CD8-positive, alpha-beta T cell (primary cell): ENCODE measurements at regions of chr2 and their contacts with region 1.

Region 1: GRCh38 chr2:157302492-157303099 is 23.0 kb downstream of the ERMN start:
- DNase-seq: peak in 7 of 9 experiments; percentile 2 to 71 (median 18)
- ATAC-seq: peak; percentile 89
- H3K4me3 ChIP-seq: no peak overlapping the region
- H3K4me3 Mint-ChIP-seq: no peak overlapping the region
- H3K27ac ChIP-seq: no peak overlapping the region
- H3K27ac Mint-ChIP-seq: no peak overlapping the region
- H3K4me1 ChIP-seq: no peaks in the 10 kb centered on the region
- H3K4me1 Mint-ChIP-seq: peaks cover 17% of the 10 kb centered on the region
- H3K27me3 ChIP-seq: no peaks in the 10 kb centered on the region
- H3K27me3 Mint-ChIP-seq: peaks cover 3% of the 10 kb centered on the region
- CTCF ChIP-seq: peak; percentile 89

Region 2: DNA sequence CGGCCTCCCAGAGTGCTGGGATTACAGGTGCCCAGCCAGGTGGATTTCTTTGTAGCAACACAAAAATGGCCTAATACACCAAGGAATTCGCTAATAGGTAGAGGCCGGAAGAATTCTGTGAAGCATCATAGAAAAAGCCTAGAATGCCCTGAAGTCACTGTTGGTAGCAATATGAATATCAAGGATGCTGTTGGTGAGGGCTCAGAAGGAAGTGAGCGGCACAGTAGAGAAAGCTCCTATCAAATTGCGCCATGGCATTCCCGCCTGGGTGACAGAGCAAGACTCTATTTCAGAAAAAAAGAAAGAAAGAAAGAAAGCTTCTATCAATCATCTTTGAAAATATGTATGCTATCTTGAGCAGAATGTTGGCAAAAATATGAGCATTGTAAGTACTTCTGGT is 21.3 kb before region 1 on chr2:
- CTCF ChIA-PET with region 1: interaction called, 32 read pairs
- POLR2A ChIA-PET with region 1: no interaction called
- intact Hi-C with region 1: no loop called
- DNase-seq: no peak
- ATAC-seq: no peak
- H3K4me3 ChIP-seq: no peak overlapping the region
- H3K4me3 Mint-ChIP-seq: no peak overlapping the region
- H3K27ac ChIP-seq: no peak overlapping the region
- H3K27ac Mint-ChIP-seq: no peak overlapping the region
- H3K4me1 ChIP-seq: no peaks in the 10 kb centered on the region
- H3K4me1 Mint-ChIP-seq: no peaks in the 10 kb centered on the region
- H3K27me3 ChIP-seq: no peaks in the 10 kb centered on the region
- H3K27me3 Mint-ChIP-seq: peaks cover 30% of the 10 kb centered on the region
- CTCF ChIP-seq: no peak

Region 3: DNA sequence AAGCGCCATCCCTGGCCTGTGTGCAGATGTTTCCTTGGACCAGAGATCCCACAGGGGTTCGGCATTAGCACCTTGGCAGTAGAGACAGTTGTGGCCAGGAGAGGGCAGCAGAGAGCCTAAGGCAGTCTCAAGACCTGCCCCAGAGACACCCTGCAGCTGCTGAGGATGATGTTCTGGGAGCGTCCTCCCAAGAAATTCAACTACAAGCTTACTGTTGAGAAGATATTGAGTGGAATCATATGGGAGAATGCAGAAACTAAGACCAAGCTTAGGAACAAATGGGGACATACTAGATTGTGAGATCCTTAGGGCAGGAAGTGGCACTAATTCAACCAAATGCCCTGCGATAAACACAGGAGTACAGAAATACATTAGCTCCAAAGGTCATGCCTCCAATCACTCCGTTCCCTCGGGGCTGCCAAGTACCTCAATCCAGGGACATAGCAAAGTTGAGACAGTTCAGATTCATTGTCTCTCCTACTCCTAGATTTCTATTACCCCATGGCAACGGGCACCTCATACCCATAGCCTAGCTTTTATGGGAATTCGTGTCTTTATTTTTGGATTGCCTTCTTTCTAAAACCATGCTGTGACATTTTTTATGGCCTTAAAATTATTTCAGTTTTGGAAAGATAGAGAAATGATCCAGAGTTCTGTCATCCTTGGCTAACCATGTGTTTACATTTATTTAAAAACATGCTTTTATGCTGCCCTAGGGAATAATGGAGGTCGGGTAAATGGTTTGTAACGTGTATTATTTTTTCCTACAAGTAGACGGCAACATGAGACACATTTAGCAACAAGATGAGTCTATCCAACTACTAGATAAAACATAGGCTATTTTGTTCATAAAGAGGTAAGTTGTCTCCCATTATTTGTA is 25.3 kb after region 1 on chr2:
- CTCF ChIA-PET with region 1: interaction called, 66 read pairs
- POLR2A ChIA-PET with region 1: interaction called, 3 read pairs
- intact Hi-C with region 1: loop called in 1 of 2 experiments (anchors 1 kb)
- DNase-seq: peak; percentile 75 to 94 (median 89)
- ATAC-seq: peak; percentile 95
- H3K4me3 ChIP-seq: peak overlapping the region in 1 of 2 experiments; percentile 2
- H3K4me3 Mint-ChIP-seq: peak overlapping the region; percentile 64
- H3K27ac ChIP-seq: no peak overlapping the region
- H3K27ac Mint-ChIP-seq: peak overlapping the region; percentile 86
- H3K4me1 ChIP-seq: peaks cover 36% of the 10 kb centered on the region
- H3K4me1 Mint-ChIP-seq: peaks cover 53% of the 10 kb centered on the region
- H3K27me3 ChIP-seq: no peaks in the 10 kb centered on the region
- H3K27me3 Mint-ChIP-seq: no peaks in the 10 kb centered on the region
- CTCF ChIP-seq: peak; percentile 87

Region 4: DNA sequence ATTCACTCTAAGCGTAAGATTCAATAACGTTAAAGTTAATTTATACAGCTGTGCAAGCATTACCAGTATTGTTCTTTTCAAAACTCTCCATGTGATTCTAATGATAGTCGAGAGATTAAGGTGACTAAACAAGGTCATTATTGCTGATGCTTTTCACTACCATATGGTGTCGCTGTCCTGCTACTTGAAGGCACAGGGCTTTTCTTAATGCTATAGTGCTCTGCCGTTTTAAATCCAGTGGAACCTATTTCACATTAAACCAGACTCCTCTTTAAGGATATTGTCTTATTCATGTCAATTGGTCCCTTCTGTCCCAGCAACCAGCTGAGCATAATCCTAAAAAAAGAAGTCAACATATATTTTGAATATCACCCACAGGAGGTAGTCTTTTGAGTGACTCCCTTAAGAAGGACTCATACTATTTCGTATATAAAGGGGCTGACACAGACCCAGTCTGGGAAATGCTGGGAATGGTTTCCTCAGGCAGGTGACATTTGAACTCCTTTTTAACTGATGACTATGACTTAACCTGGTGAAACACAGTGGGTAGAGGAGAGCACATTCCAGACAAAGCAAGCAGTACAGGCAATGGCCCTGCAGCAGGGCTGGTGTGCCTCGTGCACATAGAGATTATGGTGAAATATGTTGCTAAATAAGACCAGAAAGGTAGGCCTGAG is 195.2 kb after region 1 on chr2:
- CTCF ChIA-PET with region 1: interaction called, 77 read pairs
- POLR2A ChIA-PET with region 1: no interaction called
- intact Hi-C with region 1: loop called in 1 of 2 experiments (anchors 2 kb)
- DNase-seq: peak in 2 of 9 experiments; percentile 49 to 62
- ATAC-seq: peak; percentile 91
- H3K4me3 ChIP-seq: no peak overlapping the region
- H3K4me3 Mint-ChIP-seq: no peak overlapping the region
- H3K27ac ChIP-seq: no peak overlapping the region
- H3K27ac Mint-ChIP-seq: no peak overlapping the region
- H3K4me1 ChIP-seq: peaks cover 7% of the 10 kb centered on the region
- H3K4me1 Mint-ChIP-seq: peaks cover 33% of the 10 kb centered on the region
- H3K27me3 ChIP-seq: no peaks in the 10 kb centered on the region
- H3K27me3 Mint-ChIP-seq: no peaks in the 10 kb centered on the region
- CTCF ChIP-seq: peak; percentile 71

Region 5: DNA sequence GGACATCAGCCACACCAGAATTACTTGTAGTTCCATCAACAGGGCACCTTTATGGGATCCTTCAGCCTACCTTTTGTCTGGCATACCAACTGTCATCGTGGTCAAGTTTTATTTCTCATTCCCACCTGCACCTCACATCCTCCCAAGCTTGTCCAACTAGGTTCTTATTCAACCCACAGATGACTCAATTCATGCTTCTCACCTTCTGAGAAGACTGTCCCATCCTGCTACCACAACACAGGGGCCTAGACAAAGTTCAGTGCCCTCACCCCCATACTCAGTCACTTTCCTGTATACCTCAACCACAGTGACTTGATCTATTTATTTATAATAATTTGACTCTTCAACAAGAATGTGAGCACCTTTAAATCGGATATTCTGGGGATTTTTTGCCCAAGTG is 440.5 kb after region 1 on chr2:
- CTCF ChIA-PET with region 1: interaction called, 4 read pairs
- POLR2A ChIA-PET with region 1: no interaction called
- intact Hi-C with region 1: loop called in 1 of 2 experiments (anchors 5 kb)
- DNase-seq: no peak
- ATAC-seq: no peak
- H3K4me3 ChIP-seq: no peak overlapping the region
- H3K4me3 Mint-ChIP-seq: no peak overlapping the region
- H3K27ac ChIP-seq: no peak overlapping the region
- H3K27ac Mint-ChIP-seq: no peak overlapping the region
- H3K4me1 ChIP-seq: no peaks in the 10 kb centered on the region
- H3K4me1 Mint-ChIP-seq: no peaks in the 10 kb centered on the region
- H3K27me3 ChIP-seq: no peaks in the 10 kb centered on the region
- H3K27me3 Mint-ChIP-seq: no peaks in the 10 kb centered on the region
- CTCF ChIP-seq: no peak

Region 6: DNA sequence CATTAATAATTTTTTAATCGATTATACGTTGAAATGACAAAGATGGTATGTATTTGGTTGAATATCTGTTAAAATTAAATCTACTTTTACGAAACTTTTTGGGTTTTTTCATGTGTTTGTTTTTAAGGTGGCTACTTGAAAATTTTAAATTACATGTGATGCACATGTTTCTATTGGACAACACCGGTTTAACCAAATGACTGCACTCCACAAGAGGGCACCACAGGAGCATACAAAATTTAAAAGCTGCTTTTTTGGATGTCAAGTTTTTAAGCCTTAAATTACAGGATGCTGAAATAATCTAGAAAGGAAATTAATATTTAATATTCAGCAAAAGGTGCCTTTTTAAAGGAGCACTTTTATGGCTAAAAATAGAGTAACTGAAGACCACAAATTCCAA is 474.8 kb after region 1 on chr2:
- CTCF ChIA-PET with region 1: interaction called, 5 read pairs
- POLR2A ChIA-PET with region 1: no interaction called
- intact Hi-C with region 1: loop called in 1 of 2 experiments (anchors 1 kb)
- DNase-seq: peak in 8 of 9 experiments; percentile 4 to 55 (median 40)
- ATAC-seq: no peak
- H3K4me3 ChIP-seq: no peak overlapping the region
- H3K4me3 Mint-ChIP-seq: no peak overlapping the region
- H3K27ac ChIP-seq: no peak overlapping the region
- H3K27ac Mint-ChIP-seq: no peak overlapping the region
- H3K4me1 ChIP-seq: no peaks in the 10 kb centered on the region
- H3K4me1 Mint-ChIP-seq: peaks cover 11% of the 10 kb centered on the region
- H3K27me3 ChIP-seq: no peaks in the 10 kb centered on the region
- H3K27me3 Mint-ChIP-seq: no peaks in the 10 kb centered on the region
- CTCF ChIP-seq: peak; percentile 68

Region 7: DNA sequence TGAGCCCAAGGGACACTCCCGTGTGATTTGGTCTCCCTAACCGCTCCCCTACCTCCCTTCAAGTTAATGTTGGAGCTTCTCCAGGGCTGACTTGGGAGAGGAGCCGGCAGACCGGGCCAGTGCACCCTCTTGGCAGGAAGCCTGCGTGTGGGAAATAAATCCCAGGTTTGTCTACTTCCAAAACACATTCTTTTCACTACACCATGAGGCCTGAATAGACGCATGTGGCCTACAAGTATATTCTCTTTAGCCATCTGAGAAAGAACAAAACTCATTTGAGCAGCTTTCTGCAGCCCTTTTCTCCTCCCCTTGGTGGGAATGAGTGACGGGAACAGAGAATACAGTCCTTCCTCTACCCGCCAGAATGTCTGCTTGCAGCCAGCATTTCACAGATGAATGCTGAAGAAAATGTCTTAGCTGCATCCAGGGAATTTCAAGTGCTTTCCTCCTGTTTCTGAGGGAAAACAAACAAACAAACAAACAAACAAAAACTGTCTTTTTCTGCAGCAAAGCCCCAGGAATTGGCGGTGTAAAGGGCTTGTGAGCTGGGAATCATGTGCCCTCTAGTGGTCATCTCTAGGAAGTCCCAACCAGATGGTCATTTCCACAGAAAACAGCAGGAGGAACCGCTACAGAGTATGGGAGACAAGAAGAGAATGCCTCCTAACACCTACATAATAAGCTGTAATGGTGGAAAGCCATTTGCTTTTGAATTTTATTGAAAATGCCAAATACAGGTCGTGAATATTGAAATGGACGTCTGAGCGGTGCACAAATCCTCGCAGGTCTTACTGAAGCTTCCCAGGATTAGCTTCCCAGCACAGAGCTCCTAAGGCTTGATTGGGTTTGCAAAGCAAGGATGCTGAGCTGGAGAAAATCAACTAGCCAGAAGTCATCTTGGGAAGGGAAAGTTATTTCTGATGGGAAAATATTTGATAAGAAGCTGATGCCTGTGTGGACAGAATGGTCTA is 1451.3 kb after region 1 on chr2:
- CTCF ChIA-PET with region 1: interaction called, 7 read pairs
- POLR2A ChIA-PET with region 1: no interaction called
- intact Hi-C with region 1: loop called (anchors 1 to 2 kb)
- DNase-seq: peak in 4 of 9 experiments; percentile 21 to 58 (median 37)
- ATAC-seq: peak; percentile 52
- H3K4me3 ChIP-seq: no peak overlapping the region
- H3K4me3 Mint-ChIP-seq: no peak overlapping the region
- H3K27ac ChIP-seq: no peak overlapping the region
- H3K27ac Mint-ChIP-seq: no peak overlapping the region
- H3K4me1 ChIP-seq: no peaks in the 10 kb centered on the region
- H3K4me1 Mint-ChIP-seq: no peaks in the 10 kb centered on the region
- H3K27me3 ChIP-seq: no peaks in the 10 kb centered on the region
- H3K27me3 Mint-ChIP-seq: peaks cover 20% of the 10 kb centered on the region
- CTCF ChIP-seq: peak; percentile 91